IMR-90 (cell line): ENCODE measurements at regions of chr2 and their contacts with region 1.

Region 1: GRCh38 chr2:237966565-237967462 is at the start of gene UBE2F:
- DNase-seq: peak; percentile 95
- ATAC-seq: peak; percentile 96
- H3K4me3 ChIP-seq: peak within 1 kb of the TSS; percentile 85
- H3K27ac ChIP-seq: peak within 1 kb of the TSS; percentile 66
- H3K4me1 ChIP-seq: peaks cover 6% of the 10 kb centered on the region
- H3K27me3 ChIP-seq: no peaks in the 10 kb centered on the region
- CTCF ChIP-seq: no peak
- POLR2A ChIP-seq: peak; percentile 61; the same call in 1 of the 2 replicates
- RAD21 ChIP-seq: no peak
- total RNA-seq, gene UBE2F: 44.6 and 59.4 TPM in 2 replicates

Region 2: DNA sequence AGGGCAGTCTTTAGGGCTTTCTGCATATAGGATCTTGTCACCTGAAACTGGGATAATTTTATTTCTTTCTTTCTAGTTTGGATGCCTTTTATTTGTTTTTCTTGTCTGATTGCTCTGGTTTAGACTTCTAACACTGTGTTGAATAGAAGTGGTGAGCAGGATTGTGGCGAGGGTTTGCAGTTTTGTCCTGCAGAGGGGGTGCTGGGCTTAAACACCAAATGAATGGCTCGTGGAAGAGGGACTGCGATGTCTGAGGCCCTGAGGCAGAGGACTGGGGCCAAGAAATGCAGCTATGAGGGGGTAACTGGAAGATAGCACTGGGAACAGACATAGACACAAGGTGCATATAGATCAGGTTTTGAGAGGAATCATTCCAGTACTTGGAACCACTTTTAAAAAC is 20.5 kb after region 1 on chr2:
- CTCF ChIA-PET with region 1: no interaction called
- POLR2A ChIA-PET with region 1: no interaction called
- dilution Hi-C with region 1: no loop called
- in situ Hi-C with region 1: no loop called
- intact Hi-C with region 1: loop called (anchors 2 kb)
- DNase-seq: no peak
- ATAC-seq: no peak
- H3K4me3 ChIP-seq: no peak overlapping the region
- H3K27ac ChIP-seq: no peak overlapping the region
- H3K4me1 ChIP-seq: no peaks in the 10 kb centered on the region
- H3K27me3 ChIP-seq: no peaks in the 10 kb centered on the region
- CTCF ChIP-seq: no peak
- POLR2A ChIP-seq: no peak
- RAD21 ChIP-seq: 0 out of 2 replicates have a peak, but pooled peaks have one; percentile 5

Region 3: DNA sequence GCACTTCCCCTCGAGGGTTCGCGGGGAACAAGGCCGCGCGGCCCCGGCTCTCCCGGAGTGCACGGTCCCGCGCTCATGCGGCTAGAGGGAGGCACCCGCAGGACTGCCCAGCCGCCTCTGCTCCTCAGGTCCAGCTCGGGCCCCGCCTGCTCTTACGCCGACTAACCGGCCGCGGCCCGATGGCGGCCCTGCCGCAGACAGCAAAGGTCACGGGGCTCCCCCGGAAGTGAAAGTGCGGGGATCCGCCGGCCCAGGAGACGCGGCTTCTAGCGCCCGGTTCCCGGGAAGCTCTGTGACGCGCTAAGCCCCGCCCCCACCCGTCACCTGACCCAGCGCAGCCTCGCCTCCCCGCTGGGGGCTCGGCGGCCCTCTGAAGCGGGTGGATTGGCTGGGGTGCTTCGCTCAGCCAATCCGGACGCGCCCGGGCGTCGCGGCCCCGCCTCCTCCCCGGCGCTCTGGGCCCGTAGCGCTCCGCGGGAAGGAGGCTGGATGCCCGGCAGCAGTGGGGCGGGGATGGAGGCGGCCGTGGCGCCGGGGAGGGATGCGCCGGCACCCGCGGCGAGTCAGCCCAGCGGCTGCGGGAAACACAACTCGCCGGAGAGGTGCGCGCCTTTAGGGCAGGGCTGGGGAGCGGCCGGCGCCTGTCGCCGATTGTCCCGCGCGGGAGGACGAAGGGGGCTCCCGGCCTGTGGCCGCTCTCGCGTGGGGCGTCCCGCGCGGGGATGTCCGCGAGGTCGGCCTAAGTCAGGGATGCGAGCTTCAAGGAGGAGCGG is 93.9 kb after region 1 on chr2 and contains the start of gene SCLY:
- CTCF ChIA-PET with region 1: no interaction called
- POLR2A ChIA-PET with region 1: no interaction called
- dilution Hi-C with region 1: no loop called
- in situ Hi-C with region 1: no loop called
- intact Hi-C with region 1: loop called (anchors 5 kb)
- DNase-seq: peak; percentile 96
- ATAC-seq: peak; percentile 98
- H3K4me3 ChIP-seq: peak within 1 kb of the TSS; percentile 83
- H3K27ac ChIP-seq: peak within 1 kb of the TSS; percentile 65
- H3K4me1 ChIP-seq: no peaks in the 10 kb centered on the region; the same call in 1 of the 2 replicates
- H3K27me3 ChIP-seq: no peaks in the 10 kb centered on the region
- CTCF ChIP-seq: no peak
- POLR2A ChIP-seq: peak; percentile 85
- RAD21 ChIP-seq: peak; percentile 18; the same call in 1 of the 2 replicates
- total RNA-seq, gene SCLY: 8.6 and 12.2 TPM in 2 replicates

Region 4: DNA sequence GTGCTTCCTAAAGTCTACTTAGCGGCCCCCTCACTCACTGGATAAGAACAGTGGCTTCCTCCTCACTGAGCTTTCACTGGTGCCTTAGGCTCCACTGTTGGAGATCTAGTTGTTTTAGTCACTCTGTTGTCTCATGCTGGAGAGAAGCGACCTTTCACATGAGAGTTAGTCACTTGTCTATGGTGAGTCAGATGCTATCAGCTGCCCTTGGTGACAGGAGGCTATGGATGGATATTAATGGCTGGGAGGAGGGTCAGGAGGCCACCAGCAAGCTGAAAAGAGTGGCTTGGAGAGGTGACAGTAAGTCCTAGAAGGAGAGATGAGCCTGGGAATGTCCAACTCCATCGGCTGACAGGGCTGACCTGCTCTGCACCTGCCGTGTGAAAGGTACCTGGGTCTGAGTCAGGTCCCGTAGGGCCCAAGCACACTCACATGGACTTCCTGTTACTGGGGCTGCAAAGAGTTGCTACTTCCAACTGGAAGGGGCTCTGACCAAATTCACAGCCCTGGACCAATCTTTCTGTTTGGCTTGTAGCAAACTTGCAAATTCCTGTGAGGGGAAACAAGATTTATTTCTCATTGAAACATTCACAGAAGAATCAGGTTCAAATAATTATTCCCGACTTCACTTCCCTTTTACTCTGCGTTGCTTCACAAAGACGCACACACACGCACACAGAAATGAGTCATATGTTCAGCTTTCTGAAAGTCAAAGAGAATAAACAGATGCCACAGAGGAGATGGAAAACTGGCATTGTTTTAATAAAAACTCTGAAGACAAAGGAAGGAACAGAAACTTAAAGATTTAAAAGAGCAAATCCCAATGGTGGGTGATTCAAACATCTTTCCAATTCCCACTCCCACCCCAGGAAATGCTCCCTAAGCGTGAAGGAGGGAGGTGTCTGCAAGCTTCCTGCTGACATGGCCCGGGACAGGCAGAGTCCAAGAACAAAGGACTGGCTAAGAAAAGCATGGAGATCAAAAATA is 677.6 kb after region 1 on chr2:
- CTCF ChIA-PET with region 1: no interaction called
- POLR2A ChIA-PET with region 1: no interaction called
- dilution Hi-C with region 1: no loop called
- in situ Hi-C with region 1: no loop called
- intact Hi-C with region 1: no loop called
- DNase-seq: peak; percentile 86
- ATAC-seq: peak; percentile 87
- H3K4me3 ChIP-seq: no peak overlapping the region
- H3K27ac ChIP-seq: peak overlapping the region; percentile 77
- H3K4me1 ChIP-seq: peaks cover 15% of the 10 kb centered on the region
- H3K27me3 ChIP-seq: no peaks in the 10 kb centered on the region
- CTCF ChIP-seq: no peak
- POLR2A ChIP-seq: 0 out of 2 replicates have a peak, but pooled peaks have one; percentile 10
- RAD21 ChIP-seq: no peak